Activated CD4-positive, alpha-beta T cell treated with anti-CD3 and anti-CD28 coated beads, Interleukin-2, amount 10 ng/mL, durations not matched to agents 7 days and 5 days (primary cell): ENCODE measurements at regions of chr14 and their contacts with region 1.

Region 1: GRCh38 chr14:23017091-23017490 is 7.1 kb upstream of the C14orf93 start:
- DNase-seq: no peak
- H3K4me3 Mint-ChIP-seq: no peak overlapping the region
- H3K27ac Mint-ChIP-seq: no peak overlapping the region
- H3K4me1 Mint-ChIP-seq: peaks cover 28% of the 10 kb centered on the region
- H3K27me3 Mint-ChIP-seq: no peaks in the 10 kb centered on the region

Region 2: GRCh38 chr14:23028799-23029198 is 11.7 kb after region 1 on chr14:
- CTCF ChIA-PET with region 1: interaction called, 10 read pairs
- POLR2A ChIA-PET with region 1: no interaction called
- DNase-seq: no peak
- H3K4me3 Mint-ChIP-seq: no peak overlapping the region
- H3K27ac Mint-ChIP-seq: peak overlapping the region; percentile 73
- H3K4me1 Mint-ChIP-seq: peaks cover 54% of the 10 kb centered on the region
- H3K27me3 Mint-ChIP-seq: no peaks in the 10 kb centered on the region

Region 3: DNA sequence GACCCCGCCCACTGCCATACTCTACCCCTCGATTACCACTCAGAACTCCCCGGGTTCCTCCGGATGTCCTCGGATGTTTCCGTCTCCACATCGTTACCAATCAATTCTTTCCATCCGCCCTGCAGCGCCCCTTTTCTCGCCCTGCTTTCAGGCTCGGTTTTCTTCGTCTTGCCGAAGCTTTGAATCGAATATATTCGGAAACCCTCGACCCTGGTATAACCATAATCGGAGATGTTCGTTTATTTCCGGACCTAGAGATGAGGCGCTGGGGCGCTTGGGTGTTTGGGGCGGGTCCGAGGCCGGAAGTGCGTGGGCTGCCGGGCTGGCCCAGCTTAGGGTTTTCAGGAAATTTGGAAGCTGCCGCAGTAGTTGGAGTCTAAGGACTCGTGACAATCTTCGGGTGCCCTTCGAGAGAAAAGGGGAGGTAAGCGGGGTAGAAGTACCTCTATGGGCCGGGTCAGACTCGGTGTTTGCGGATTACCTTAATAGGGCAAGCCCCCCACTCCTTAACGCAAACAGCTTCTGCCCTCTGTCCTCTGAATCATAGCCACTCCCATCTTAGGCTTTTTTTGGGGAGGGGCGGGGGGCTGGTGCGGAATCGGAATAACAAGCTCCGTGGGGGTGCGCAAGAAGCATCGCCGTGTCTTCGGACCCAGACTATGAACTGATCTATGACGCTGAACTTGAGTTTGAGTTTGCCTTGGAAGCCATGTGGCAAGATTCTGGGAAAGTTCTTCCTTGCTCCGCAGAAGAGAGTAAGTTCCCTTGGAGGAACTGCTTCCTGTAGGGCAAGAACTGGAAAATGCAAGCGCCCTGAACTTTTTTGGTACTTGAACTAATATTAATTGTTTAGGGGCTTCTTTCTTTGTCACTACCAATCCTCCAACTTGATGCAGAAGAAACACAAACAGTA is 78.4 kb after region 1 on chr14 and contains the start of gene C14orf119:
- CTCF ChIA-PET with region 1: no interaction called
- POLR2A ChIA-PET with region 1: no interaction called
- DNase-seq: peak; percentile 100
- H3K4me3 Mint-ChIP-seq: no peak within 1 kb of the TSS
- H3K27ac Mint-ChIP-seq: no peak within 1 kb of the TSS
- H3K4me1 Mint-ChIP-seq: peaks cover 34% of the 10 kb centered on the region
- H3K27me3 Mint-ChIP-seq: no peaks in the 10 kb centered on the region
- total RNA-seq, gene C14orf119: 48.0 to 48.2 TPM